Endothelial cell of umbilical vein (primary cell): ENCODE measurements at regions of chr18 and their contacts with region 1.

Region 1: DNA sequence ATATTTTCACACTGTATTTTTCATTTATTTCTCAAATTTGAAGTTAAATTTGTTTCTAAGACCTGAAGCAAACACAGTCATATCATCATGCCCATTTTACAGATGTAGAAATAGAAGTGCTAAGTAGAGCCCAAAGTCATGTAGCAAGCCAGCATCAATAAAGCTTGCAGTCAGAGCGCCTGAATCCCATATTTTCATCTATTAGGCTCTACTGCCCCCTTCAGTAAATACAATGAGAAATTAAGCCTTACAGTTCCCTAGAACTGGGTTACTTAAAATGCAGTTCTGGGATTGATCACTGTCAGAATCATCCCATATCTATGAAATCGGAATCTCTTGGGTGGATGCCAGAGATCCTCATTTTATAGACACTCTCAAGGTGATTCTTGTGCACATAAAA is 419.9 kb downstream of the TGIF1 start:
- DNase-seq: peak; percentile 68
- H3K4me3 ChIP-seq: no peak overlapping the region
- H3K27ac ChIP-seq: no peak overlapping the region
- H3K4me1 ChIP-seq: no peaks in the 10 kb centered on the region
- H3K27me3 ChIP-seq: peaks cover 0 to 14% of the 10 kb centered on the region in 2 experiments
- CTCF ChIP-seq: peak; percentile 28 to 39
- POLR2A ChIP-seq: no peak

Region 2: DNA sequence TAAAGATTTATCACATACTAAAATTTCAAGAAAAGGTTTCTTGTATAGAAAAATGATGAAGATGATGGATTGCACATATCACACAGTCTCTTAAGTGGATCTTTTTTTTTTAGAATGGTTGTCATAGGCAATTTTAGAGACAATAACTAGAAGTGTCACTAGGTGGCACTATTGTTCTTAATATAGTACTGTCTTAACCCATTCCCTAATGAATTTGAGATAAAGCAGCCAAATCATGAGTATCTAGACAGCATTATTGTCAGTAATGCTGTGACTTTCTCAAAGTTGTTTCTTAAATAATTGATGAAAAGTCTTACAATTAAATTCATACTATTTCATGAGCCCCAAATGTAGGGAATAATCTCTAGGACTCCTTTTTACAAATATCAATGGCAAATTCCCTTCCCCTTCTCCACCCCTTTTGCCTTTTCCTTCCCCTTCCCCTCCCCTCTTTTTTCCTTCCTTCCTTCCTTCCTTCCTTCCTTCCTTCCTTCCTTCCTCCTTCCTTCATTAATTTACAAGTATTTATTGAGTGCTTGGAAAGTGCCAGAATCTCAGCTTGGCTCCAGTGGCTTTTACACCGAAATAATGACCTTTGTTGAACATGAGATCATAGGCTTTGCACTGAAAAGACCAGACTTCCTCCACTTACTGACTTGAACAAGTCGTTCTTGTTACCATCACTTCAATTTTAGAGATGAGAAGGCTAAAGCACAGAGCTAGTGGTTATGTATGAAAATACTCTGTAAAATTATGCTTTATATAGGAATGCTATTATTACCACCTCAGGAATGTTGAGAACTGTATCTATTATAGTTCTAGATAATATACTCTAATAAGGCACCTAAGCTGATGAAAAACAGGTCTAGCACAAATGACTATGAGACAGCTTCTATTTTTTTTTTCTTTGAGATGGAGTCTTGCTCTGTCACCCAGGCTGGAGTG is 588.1 kb before region 1 on chr18:
- CTCF ChIA-PET with region 1: interaction called, 49 read pairs
- POLR2A ChIA-PET with region 1: no interaction called
- dilution Hi-C with region 1: no loop called
- intact Hi-C with region 1: loop called (anchors 1 kb)
- DNase-seq: peak; percentile 91
- H3K4me3 ChIP-seq: no peak overlapping the region
- H3K27ac ChIP-seq: peak overlapping the region; percentile 84
- H3K4me1 ChIP-seq: peaks cover 38% of the 10 kb centered on the region
- H3K27me3 ChIP-seq: no peaks in the 10 kb centered on the region
- CTCF ChIP-seq: peak; percentile 6 to 21
- POLR2A ChIP-seq: no peak

Region 3: DNA sequence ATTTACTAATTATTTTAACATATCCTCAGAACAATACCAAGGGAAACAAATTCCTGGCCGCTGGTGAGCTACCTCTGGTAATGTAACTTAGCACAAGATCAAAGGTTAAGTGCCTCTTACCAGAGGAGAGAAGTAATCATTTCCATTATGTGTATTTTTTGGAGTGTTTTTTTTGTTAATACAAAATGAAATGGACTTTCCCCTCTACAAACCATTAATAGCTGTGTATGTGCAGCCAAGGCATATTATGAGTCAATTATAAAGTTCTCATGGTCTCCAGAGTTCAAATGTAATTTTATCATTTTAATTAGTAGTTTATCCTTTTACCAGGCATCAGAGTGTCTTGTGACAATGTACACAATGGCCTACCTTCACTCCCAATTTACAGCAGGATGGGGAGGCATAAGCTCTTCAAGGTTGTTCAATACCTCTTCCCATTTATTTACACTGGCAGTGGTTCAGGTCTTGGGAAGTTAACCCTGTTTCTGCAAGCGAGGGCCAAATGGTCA is 177.7 kb before region 1 on chr18:
- CTCF ChIA-PET with region 1: interaction called, 14 read pairs
- POLR2A ChIA-PET with region 1: no interaction called
- dilution Hi-C with region 1: no loop called
- intact Hi-C with region 1: no loop called
- DNase-seq: no peak
- H3K4me3 ChIP-seq: no peak overlapping the region
- H3K27ac ChIP-seq: no peak overlapping the region
- H3K4me1 ChIP-seq: no peaks in the 10 kb centered on the region
- H3K27me3 ChIP-seq: no peaks in the 10 kb centered on the region
- CTCF ChIP-seq: no peak
- POLR2A ChIP-seq: no peak

Region 4: DNA sequence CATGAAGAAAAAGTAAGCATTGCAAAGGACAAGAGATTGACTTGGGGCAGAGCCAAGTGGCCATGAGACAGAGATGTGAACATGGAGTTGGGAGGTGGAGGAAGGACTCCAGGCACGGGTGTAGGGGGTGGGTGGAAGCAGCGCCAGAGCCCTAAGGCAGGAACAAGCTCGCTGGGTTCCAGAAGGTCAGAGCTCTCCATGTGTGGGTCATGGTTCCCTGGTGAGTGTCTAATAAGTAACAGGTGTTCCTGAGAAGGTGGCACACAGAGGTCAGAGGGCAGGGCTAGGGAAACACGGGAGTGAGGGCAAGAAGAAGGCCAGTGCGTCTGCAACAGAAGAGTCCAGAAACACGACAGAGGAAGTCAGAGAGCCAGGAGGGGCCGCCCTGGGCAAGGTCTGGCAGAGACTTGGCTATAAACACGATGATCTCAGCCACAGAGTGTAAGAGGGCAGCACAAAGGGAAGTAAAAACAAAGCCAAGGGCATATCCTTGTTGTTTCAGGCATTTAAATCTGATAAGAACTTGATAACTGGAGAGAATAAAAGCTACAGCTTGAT is 159.1 kb before region 1 on chr18:
- CTCF ChIA-PET with region 1: interaction called, 186 read pairs
- POLR2A ChIA-PET with region 1: no interaction called
- dilution Hi-C with region 1: no loop called
- intact Hi-C with region 1: no loop called
- DNase-seq: peak; percentile 96
- H3K4me3 ChIP-seq: no peak overlapping the region
- H3K27ac ChIP-seq: peak overlapping the region; percentile 90
- H3K4me1 ChIP-seq: peaks cover 27% of the 10 kb centered on the region
- H3K27me3 ChIP-seq: no peaks in the 10 kb centered on the region
- CTCF ChIP-seq: no peak
- POLR2A ChIP-seq: peak; percentile 93

Region 5: GRCh38 chr18:3794537-3795348 is 75.1 kb before region 1 on chr18:
- CTCF ChIA-PET with region 1: interaction called, 38 read pairs
- POLR2A ChIA-PET with region 1: interaction called, 3 read pairs
- dilution Hi-C with region 1: no loop called
- intact Hi-C with region 1: no loop called
- DNase-seq: peak; percentile 97
- H3K4me3 ChIP-seq: no peak overlapping the region
- H3K27ac ChIP-seq: peak overlapping the region; percentile 95
- H3K4me1 ChIP-seq: peaks cover 34% of the 10 kb centered on the region
- H3K27me3 ChIP-seq: no peaks in the 10 kb centered on the region
- CTCF ChIP-seq: peak in 1 of 2 donors; percentile 6
- POLR2A ChIP-seq: no peak

Region 6: DNA sequence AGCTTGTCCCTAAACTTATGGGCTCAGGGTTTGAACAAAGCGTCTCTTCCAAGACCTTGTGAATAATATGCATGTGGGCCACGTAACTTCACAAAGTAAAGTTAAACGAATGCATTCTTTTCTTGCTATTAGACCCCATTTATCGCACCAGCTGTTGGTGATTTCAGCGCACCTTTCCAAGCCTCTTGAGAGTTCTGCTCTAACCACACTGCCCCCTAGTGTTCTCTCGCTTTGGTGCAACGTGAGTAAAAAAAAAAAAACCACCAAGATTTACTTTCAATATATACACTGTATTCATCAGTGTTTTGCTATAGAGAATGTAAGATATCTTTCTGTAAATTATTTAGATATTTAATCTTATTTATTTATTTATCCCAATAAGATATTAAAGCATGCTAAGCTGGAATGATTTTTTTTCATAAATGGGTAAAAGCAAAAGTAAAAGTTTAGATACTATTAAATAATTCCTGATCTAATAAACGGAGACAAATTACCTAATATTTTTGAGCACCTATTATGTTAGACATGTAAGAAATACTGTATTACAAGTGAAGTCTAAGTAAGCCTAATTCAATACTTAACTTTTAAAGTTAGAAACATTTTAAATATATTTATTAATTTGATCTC is 125.7 kb after region 1 on chr18:
- CTCF ChIA-PET with region 1: interaction called, 18 read pairs
- POLR2A ChIA-PET with region 1: no interaction called
- dilution Hi-C with region 1: no loop called
- intact Hi-C with region 1: loop called (anchors 2 kb)
- DNase-seq: peak; percentile 78
- H3K4me3 ChIP-seq: no peak overlapping the region
- H3K27ac ChIP-seq: no peak overlapping the region
- H3K4me1 ChIP-seq: no peaks in the 10 kb centered on the region
- H3K27me3 ChIP-seq: no peaks in the 10 kb centered on the region
- CTCF ChIP-seq: peak; percentile 75 to 85
- POLR2A ChIP-seq: no peak